ENCODE measurements at regions of chr1 and their contacts with region 1.

Region 1: GRCh38 chr1:159936273-159936904 is 9.0 kb downstream of the IGSF9 start:
- DNase-seq: no peak
- H3K4me3 ChIP-seq: no peak overlapping the region
- H3K27me3 ChIP-seq: peaks cover 4% of the 10 kb centered on the region
- CTCF ChIP-seq: peak; percentile 96

Region 2: DNA sequence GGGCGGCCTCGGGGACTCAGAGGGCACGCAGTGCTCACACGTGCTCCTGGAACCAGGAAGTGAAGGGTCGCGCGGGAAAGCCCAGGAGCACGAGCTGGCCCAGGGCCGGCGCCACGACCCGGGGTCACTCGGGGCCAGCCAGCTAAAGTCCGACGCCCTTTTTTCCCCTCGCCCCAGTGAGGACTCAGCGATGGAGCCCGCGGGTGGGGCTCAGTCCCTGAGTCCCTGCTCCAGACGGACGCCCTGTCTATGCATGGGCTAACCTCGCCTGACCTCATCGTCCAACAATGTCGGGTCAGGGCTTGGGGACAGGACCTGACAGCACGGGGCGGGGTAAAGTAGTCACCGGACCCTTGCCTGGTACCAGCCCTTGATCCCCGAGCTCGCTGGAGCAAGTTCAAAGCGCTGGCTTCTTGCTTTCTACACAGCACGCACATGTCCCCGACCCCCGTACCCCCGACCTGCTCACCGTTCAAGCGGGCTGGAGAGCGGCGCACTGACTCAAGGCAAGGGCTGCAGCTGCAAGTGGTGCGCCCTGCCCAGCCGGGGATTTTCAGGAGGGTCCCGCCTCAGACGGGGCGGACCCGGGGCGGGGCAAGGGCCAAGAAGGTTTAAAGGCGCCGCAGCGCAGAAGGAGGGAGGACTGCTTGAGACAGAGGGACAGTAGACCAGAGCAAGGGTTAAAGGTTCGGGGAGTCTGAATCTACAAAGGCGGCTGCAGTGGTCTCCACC is 11.2 kb before region 1 on chr1 and contains the start of gene TAGLN2:
- CTCF ChIA-PET with region 1: interaction called, 23 read pairs
- POLR2A ChIA-PET with region 1: no interaction called
- DNase-seq: peak; percentile 70
- H3K4me3 ChIP-seq: peak within 1 kb of the TSS; percentile 81
- H3K27me3 ChIP-seq: no peaks in the 10 kb centered on the region
- CTCF ChIP-seq: no peak
- polyA plus RNA-seq, gene TAGLN2: 628 and 745 TPM in 2 replicates

Region 3: GRCh38 chr1:160238408-160238807 is 302.0 kb after region 1 on chr1:
- CTCF ChIA-PET with region 1: no interaction called
- POLR2A ChIA-PET with region 1: no interaction called
- DNase-seq: no peak
- H3K4me3 ChIP-seq: no peak overlapping the region
- H3K27me3 ChIP-seq: no peaks in the 10 kb centered on the region
- CTCF ChIP-seq: no peak

Measured in BJ (cell line).